ENCODE measurements at regions of chr11 and their contacts with region 1.

Region 1: GRCh38 chr11:93652161-93652597 is 9.3 kb upstream of the CEP295 start:
- DNase-seq: no peak
- ATAC-seq: no peak

Region 2: DNA sequence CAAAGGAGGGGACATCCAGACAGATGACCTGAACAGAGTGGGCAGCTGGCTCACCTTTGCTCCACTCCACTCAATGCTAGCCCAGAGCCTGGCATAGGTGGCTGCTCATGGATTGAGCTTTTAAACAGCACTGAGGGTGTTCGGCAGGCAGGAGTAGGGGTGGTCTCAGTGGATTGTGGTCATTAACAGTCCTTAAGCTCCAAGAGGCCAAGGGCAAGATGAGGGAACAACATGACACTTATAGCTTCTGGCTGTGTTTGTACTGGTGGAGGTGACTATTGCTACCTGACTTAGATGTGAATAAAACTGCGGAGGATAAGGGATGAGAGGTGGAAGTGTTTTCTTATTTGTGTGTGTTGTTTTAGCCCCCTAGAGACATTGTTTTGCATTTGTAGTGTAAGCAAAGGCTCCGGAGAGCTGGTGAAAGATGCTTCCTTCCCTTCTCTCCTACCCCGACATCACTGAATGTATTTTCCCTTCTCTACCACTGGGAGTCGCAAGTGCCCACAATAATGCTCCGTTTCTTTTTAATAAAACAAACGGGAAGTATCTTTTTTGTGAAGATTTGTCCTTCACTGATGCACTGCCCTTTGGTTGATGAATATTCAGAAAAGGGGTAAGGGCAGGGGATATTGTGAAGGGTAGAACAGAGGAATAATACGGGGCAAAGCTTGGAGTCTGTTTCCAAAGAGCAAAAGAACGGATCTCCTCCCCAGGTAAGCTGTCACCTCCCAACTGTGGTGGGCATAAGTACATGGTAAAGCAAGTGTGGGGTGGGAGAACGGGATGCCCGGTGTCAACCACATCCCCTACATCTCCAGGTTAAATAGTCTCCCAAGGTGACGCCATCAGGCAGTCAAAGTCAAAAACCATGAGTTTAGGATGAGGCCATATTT is 710.3 kb before region 1 on chr11:
- intact Hi-C with region 1: loop called (anchors 5 kb)
- DNase-seq: no peak
- ATAC-seq: peak; percentile 51

Region 3: DNA sequence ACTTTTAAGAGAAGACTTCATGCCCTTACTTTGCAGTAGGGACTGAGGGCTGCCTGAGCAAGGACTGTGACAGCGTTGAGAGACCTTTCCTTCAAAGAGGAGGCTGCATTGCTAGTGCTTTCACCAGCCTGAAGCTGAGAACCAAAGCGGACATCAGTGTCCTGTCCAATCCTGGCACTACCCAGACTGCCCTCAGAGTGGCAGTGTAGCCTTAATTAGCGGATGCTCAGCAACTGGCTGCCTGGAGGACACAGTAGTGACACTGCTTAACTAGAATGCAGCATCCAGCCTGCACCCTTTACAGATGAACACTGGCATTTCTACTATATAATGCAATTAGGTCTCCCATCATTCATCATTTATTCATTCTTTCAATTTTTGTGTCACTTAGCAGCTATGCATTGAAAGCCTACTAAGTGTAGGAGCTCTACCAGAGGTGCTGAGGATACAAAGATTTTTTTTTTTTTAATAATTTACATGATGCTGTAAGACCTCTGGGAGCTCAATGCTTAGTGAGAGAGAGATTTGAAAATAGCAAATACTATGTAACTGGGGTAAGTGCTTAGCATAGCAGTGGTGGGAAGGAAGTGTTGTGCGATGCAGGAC is 417.5 kb before region 1 on chr11:
- intact Hi-C with region 1: loop called (anchors 2 kb)
- DNase-seq: peak; percentile 79
- ATAC-seq: peak; percentile 98

Region 4: GRCh38 chr11:93303689-93304088 is 348.5 kb before region 1 on chr11:
- intact Hi-C with region 1: no loop called
- DNase-seq: no peak
- ATAC-seq: no peak

Region 5: DNA sequence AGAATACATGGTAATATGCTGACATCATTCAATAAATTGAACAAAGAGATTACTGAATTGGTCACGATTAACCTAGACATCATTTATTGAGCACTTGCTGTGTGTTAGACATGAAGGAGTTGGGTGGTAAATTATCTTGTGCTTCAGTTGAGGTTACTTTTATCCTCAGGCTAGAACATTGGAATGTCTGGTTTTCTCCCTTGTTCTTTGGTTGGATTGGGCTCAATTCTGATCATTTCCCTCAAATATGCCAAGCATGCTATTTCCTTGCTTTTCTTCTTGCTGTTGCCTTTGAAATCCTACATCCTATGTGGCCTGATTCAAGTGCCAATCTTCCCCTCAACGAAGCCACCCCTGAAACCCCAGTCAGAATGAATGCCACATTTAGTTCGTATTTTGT is 255.9 kb before region 1 on chr11:
- intact Hi-C with region 1: no loop called
- DNase-seq: no peak
- ATAC-seq: no peak

Region 6: GRCh38 chr11:93543292-93543977 is 108.7 kb before region 1 on chr11 and contains the start of gene SMCO4:
- intact Hi-C with region 1: loop called (anchors 10 kb)
- DNase-seq: peak; percentile 92
- ATAC-seq: peak; percentile 95
- total RNA-seq, gene SMCO4: 43.4 TPM

Region 7: GRCh38 chr11:93608364-93608763 is 43.8 kb before region 1 on chr11:
- intact Hi-C with region 1: no loop called
- DNase-seq: no peak
- ATAC-seq: peak; percentile 25

Region 8: GRCh38 chr11:93831343-93832139 is 179.4 kb after region 1 on chr11:
- intact Hi-C with region 1: no loop called
- DNase-seq: no peak
- ATAC-seq: no peak